Endothelial cell of umbilical vein (primary cell): ENCODE measurements at regions of chr5 and their contacts with region 1.

Region 1: DNA sequence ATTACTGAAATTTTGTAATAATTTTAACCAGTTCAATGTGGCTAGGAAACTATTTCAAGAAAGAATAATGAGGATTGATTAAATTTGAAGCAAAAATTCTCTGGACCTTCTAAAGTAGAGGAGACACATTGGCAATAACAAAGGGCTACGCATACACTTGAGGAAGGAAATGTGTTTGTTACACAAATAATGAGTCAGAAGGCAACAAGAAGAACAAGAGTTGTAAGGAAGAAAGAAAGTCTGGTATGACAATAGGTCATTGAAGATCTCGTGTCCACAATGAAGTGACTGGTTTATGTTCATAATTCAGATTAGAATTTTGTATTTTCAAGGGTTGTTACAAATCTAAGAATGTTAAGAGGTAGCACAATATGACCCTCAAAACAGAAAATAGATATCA is 25.8 kb downstream of the ST8SIA4 start:
- DNase-seq: peak; percentile 87
- H3K4me3 ChIP-seq: no peak overlapping the region
- H3K27ac ChIP-seq: peak overlapping the region; percentile 84
- H3K4me1 ChIP-seq: peaks cover 16% of the 10 kb centered on the region
- H3K27me3 ChIP-seq: no peaks in the 10 kb centered on the region
- CTCF ChIP-seq: no peak
- POLR2A ChIP-seq: no peak

Region 2: DNA sequence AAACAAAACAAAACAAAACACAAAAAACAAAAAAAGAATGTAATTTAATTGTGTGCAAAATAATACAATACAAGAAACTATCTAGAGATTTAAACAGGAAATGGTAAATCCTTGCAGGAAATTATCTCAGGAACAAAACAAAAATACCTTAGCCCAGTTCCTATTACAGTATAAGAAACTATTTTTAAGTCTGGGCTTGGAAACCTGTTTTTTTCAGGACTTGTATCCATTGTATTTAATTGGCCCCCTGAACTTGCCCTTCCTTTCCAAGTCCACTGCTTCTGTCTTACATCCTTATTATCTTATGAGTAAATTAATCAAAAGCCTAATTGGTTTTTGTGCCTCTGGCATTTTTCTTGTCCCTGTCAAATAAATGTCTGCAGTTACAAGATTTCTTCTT is 22.7 kb before region 1 on chr5:
- CTCF ChIA-PET with region 1: interaction called, 3 read pairs
- POLR2A ChIA-PET with region 1: no interaction called
- dilution Hi-C with region 1: no loop called
- intact Hi-C with region 1: loop called (anchors 1 kb)
- DNase-seq: peak; percentile 84
- H3K4me3 ChIP-seq: no peak overlapping the region
- H3K27ac ChIP-seq: peak overlapping the region; percentile 28
- H3K4me1 ChIP-seq: peaks cover 13% of the 10 kb centered on the region
- H3K27me3 ChIP-seq: no peaks in the 10 kb centered on the region
- CTCF ChIP-seq: no peak
- POLR2A ChIP-seq: no peak